ENCODE measurements at regions of chr17 and their contacts with region 1.

Region 1: DNA sequence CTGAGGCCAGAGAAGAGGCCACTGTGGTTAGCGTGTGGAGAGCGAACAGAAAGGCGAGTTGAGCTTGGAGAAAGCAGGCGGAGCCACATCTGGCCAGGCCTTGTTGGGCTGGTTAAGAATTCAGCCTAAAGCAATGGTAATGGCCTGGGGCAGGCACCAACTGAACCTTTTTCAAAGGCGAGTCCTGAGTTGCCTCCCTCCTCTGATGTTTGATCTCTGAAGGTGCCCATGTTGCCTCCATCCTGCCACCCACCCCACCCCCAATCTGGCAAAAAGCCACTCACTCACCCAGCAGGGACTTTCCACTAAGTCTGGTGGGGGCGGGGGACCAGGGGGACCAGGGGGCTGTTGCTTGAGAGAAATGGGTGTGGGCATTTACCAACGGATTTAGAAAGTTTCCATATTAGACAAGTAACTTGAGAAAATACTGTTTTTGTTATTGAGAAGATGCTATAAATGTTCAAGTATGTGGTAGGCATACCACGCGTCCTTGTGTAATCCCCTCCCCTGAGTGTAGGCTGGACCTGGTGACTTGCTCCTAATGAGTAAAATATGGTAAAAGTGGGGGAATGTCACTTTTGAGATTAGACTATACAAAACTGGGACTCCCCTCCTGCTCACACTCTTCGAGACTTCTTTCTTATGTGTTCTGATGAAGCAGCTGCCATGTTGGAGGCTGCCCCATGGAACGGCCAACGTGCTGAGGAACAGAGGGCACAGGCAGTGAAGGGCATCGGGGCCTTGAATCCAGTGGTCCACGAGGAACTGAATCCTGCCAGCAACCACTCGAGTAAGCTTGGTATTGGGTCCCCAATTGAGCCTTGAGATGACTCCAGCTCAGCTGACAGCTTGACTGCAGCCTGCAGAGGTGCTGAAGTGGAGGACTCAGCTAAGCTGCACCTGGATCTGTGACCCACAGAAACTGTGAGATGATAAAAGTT is 29.9 kb upstream of the TNS4 start:
- DNase-seq: peak; percentile 84 to 89
- H3K4me3 ChIP-seq: no peak overlapping the region
- H3K27ac ChIP-seq: peak overlapping the region; percentile 75 to 99 (median 94)
- H3K4me1 ChIP-seq: peaks cover 33 to 61% of the 10 kb centered on the region in 2 donors
- H3K27me3 ChIP-seq: no peaks in the 10 kb centered on the region
- CTCF ChIP-seq: no peak
- POLR2A ChIP-seq: peak in 1 of 2 donors; percentile 33

Region 2: DNA sequence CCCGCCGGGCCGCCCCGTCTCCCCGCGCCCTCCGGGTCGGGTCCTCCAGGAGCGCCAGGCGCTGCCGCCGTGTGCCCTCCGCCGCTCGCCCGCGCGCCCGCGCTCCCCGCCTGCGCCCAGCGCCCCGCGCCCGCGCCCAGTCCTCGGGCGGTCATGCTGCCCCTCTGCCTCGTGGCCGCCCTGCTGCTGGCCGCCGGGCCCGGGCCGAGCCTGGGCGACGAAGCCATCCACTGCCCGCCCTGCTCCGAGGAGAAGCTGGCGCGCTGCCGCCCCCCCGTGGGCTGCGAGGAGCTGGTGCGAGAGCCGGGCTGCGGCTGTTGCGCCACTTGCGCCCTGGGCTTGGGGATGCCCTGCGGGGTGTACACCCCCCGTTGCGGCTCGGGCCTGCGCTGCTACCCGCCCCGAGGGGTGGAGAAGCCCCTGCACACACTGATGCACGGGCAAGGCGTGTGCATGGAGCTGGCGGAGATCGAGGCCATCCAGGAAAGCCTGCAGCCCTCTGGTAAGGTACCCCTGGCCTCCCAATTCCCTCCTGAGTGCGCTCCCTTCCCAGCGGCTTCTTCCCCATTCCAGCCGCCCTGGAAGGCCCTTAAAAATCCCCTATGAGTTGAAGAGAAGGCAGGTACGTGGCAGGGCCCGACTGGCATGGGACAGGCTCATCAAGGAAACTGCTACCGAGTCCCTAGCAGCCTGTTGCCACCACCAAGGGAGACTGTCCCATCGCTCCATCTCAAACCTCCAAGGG is 87.6 kb before region 1 on chr17:
- intact Hi-C with region 1: loop called (anchors 5 kb)
- DNase-seq: peak; percentile 83 to 88
- H3K4me3 ChIP-seq: peak overlapping the region; percentile 65 to 77 (median 76)
- H3K27ac ChIP-seq: peak overlapping the region; percentile 93 to 98 (median 94)
- H3K4me1 ChIP-seq: peaks cover 32 to 37% of the 10 kb centered on the region in 2 donors
- H3K27me3 ChIP-seq: no peaks in the 10 kb centered on the region
- CTCF ChIP-seq: peak in 3 of 6 experiments; percentile 22 to 45 (median 37)
- POLR2A ChIP-seq: peak in 1 of 2 donors; percentile 33

Region 3: DNA sequence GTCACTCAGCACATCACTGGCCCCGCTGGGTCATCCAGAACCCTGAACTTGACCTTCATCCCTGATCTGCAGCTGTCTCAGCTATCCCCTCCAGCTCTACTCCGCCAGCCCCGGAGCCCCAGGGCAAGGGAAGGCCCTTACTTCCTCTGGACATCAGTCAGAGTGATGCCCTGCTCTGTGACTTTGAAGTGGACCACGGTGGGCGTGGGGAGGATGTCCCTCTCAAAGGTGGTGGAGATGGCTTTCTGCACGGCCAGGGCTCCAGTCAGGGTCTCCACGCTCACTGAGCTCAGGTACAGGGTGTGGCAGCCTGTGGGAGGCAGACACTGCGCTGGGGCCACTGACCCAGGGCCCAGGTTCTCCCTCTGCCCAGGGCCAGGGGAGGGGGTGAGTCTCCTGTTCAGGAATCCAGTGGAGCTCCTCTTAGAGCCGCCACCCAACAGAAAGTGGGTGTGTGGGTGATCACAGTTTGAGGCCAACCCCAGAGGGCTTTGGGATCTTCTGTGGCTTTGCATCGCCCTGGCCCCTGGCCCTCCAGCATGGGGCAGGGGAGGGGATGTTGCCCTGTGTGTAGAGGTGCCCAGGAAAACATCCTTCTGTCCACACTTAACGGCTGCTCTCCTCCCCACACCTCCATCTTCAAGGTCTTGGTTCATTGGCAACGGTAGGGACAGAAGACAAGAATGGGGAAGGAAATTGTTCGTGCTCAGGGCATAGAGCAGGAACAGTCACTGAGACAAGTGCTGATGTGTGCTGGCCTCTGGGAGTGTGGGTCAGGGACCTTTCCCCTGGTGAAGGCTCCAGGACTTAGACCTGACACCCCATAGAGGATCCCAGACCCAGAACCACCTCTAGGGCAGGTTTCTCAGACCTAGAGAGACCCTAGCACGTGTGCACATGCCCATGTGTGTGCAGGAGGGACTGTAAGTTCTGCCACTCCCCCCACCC is 51.5 kb before region 1 on chr17:
- intact Hi-C with region 1: loop called (anchors 5 kb)
- DNase-seq: no peak
- H3K4me3 ChIP-seq: no peak overlapping the region
- H3K27ac ChIP-seq: no peak overlapping the region
- H3K4me1 ChIP-seq: peaks cover 6 to 23% of the 10 kb centered on the region in 2 donors
- H3K27me3 ChIP-seq: no peaks in the 10 kb centered on the region
- CTCF ChIP-seq: no peak
- POLR2A ChIP-seq: no peak

Region 4: GRCh38 chr17:40559954-40560591 is 28.8 kb after region 1 on chr17:
- intact Hi-C with region 1: loop called (anchors 2 kb)
- DNase-seq: peak; percentile 94 to 95
- H3K4me3 ChIP-seq: no peak overlapping the region
- H3K27ac ChIP-seq: peak overlapping the region; percentile 83 to 95 (median 93)
- H3K4me1 ChIP-seq: peaks cover 11 to 64% of the 10 kb centered on the region in 2 donors
- H3K27me3 ChIP-seq: no peaks in the 10 kb centered on the region
- CTCF ChIP-seq: peak; percentile 94 to 100 (median 98)
- POLR2A ChIP-seq: peak in 1 of 2 donors; percentile 56

Measured in thyroid gland (tissue), 4 donors.